Breast epithelium (tissue), 4 donors: ENCODE measurements at regions of chrX and their contacts with region 1.

Region 1: DNA sequence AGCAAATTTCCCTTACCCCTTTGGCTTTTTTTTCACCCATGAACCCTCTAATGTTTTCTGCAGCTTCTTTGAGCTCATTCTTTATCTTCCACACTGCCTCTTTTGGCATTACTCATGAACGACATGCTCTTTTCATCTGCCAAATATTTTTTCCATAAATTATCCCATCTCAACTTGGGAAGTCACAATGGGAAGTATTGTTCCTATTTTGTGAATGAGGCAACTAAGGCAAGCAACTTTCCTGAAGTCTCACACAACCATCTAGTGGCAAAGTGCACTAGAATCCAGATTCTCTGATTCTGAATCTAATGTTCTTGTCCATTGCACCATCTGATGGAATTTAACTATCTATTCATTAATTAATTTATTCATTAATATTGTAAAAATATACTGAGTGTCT is 625 bp downstream of the RTL9 start:
- DNase-seq: no peak
- H3K4me3 ChIP-seq: no peak overlapping the region
- H3K27ac ChIP-seq: no peak overlapping the region
- H3K4me1 ChIP-seq: no peaks in the 10 kb centered on the region
- H3K27me3 ChIP-seq: peaks cover 0 to 60% of the 10 kb centered on the region in 2 donors
- CTCF ChIP-seq: no peak
- POLR2A ChIP-seq: no peak

Region 2: GRCh38 chrX:109918753-109919152 is 440.5 kb before region 1 on chrX:
- intact Hi-C with region 1: loop called (anchors 5 kb)
- DNase-seq: no peak
- H3K4me3 ChIP-seq: no peak overlapping the region
- H3K27ac ChIP-seq: no peak overlapping the region
- H3K4me1 ChIP-seq: no peaks in the 10 kb centered on the region
- H3K27me3 ChIP-seq: peaks cover 0 to 31% of the 10 kb centered on the region in 2 donors
- CTCF ChIP-seq: no peak
- POLR2A ChIP-seq: no peak